PC-9 (cell line): ENCODE measurements at regions of chr1 and their contacts with region 1.

Region 1: DNA sequence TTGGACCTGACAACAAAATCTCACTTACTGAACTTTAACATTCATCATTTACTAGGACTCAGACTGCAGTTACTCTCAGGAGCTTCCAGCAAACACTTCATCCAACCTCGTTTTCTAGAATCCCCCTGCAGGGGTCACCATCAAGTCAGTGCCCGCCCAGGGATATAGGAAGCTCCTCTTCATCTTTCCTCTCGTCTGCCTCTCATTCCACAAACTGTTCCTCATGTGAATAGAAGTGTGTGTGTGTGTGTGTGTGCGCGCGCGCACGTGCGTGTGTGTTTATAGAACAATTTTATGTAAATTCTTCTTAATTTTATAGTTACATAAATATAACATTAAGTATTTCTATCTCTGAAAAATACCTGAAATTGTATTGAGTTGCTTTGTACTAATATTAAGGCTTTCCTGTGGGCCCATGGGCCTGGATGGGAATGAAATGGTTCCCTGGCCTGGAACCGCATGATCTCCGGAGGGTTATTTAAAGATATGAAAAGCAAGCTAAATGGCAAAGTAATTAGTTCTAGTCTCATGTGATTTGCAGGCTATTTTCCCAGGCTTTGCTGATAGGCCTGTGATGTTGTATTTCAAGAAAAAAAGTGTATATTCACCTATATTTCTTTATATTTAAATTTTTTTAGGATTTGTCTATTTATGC is 21.7 kb upstream of the ABCD3 start:
- DNase-seq: no peak
- H3K4me3 ChIP-seq: no peak overlapping the region
- H3K27ac ChIP-seq: no peak overlapping the region
- H3K4me1 ChIP-seq: no peaks in the 10 kb centered on the region; the same call in 1 of the 2 replicates
- H3K27me3 ChIP-seq: no peaks in the 10 kb centered on the region
- CTCF ChIP-seq: no peak

Region 2: DNA sequence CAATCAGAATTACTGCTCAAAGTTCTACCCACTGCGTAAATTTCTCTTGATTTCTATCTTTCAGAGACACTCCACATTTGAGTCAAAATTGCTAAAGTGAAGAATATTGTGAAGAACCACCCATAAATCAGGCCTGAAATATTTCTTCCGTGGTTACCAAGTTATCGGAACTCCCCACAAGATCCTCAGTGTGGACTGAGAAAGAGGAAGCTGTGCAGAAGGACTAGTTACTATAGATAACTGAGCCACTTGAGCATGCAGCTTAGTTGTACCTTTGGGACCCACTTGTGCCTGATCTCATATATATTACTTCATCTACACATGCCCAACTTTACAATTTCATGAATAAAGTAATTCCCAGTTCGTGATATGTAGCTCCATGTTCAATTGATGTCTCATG is 855.9 kb after region 1 on chr1:
- CTCF ChIA-PET with region 1: no interaction called
- POLR2A ChIA-PET with region 1: interaction called, 12 read pairs
- intact Hi-C with region 1: no loop called
- DNase-seq: no peak
- H3K4me3 ChIP-seq: no peak overlapping the region
- H3K27ac ChIP-seq: no peak overlapping the region
- H3K4me1 ChIP-seq: peaks cover 15% of the 10 kb centered on the region
- H3K27me3 ChIP-seq: no peaks in the 10 kb centered on the region
- CTCF ChIP-seq: no peak